ENCODE measurements at regions of chr4 and their contacts with region 1.

Region 1: GRCh38 chr4:173301518-173302201 is 32.5 kb downstream of the HMGB2 start:
- DNase-seq: no peak
- ATAC-seq: peak; percentile 58
- H3K4me3 ChIP-seq: no peak overlapping the region
- H3K27ac ChIP-seq: no peak overlapping the region
- H3K4me1 ChIP-seq: no peaks in the 10 kb centered on the region
- H3K27me3 ChIP-seq: no peaks in the 10 kb centered on the region
- CTCF ChIP-seq: peak; percentile 58 to 70 (median 60)
- EP300 ChIP-seq: no peak
- POLR2A ChIP-seq: no peak
- RAD21 ChIP-seq: peak; percentile 75

Region 2: DNA sequence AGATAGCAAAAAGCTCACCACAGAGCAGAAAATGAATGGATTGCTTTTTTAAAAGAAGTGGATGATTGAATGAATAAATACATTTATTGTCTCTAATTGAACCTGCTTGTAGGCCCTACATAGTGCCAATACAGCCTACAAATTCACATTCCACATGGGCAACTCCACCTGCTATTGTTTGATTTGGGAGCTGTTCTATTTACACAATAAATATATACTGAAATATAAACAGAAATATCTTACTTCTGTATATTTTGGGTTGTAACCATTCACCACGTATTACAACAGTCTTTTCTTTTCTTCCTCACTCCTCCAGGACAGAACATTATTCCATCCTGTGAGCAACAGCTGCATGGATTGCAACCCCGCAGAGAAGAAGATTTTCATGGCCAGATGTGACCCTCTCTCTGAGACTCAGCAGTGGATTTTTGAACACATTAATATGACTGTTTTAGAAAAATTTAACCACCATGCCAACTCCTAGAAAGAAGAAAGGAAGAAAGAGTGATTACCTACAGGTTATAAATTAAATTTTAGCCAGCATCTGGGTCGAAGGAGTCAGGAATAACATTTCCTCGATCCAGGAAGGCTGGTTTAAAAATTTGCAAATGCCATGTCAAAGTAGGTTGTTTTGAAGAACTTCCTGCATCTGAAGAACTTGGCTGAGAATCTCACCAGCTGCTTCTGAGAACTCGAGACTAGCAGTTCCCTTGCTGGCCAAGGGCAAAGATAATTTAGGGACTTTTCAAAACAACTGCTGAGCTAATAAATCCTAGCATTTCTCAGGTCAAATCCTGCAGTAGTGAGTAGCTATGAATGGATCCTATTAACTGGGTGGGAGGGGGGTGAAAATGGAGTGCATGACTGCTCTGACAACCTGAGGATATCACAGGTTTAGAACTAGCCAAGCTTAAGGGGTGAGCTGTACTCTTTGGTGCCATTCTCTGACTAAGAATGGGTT is 261.8 kb before region 1 on chr4:
- CTCF ChIA-PET with region 1: interaction called, 10 read pairs
- POLR2A ChIA-PET with region 1: no interaction called
- RAD21 ChIA-PET with region 1: no interaction called
- SMC1A ChIA-PET with region 1: no interaction called
- in situ Hi-C with region 1: no loop called
- intact Hi-C with region 1: no loop called
- DNase-seq: no peak
- ATAC-seq: no peak
- H3K4me3 ChIP-seq: no peak overlapping the region
- H3K27ac ChIP-seq: no peak overlapping the region
- H3K4me1 ChIP-seq: no peaks in the 10 kb centered on the region
- H3K27me3 ChIP-seq: no peaks in the 10 kb centered on the region
- CTCF ChIP-seq: no peak
- EP300 ChIP-seq: no peak
- POLR2A ChIP-seq: no peak
- RAD21 ChIP-seq: no peak

Region 3: DNA sequence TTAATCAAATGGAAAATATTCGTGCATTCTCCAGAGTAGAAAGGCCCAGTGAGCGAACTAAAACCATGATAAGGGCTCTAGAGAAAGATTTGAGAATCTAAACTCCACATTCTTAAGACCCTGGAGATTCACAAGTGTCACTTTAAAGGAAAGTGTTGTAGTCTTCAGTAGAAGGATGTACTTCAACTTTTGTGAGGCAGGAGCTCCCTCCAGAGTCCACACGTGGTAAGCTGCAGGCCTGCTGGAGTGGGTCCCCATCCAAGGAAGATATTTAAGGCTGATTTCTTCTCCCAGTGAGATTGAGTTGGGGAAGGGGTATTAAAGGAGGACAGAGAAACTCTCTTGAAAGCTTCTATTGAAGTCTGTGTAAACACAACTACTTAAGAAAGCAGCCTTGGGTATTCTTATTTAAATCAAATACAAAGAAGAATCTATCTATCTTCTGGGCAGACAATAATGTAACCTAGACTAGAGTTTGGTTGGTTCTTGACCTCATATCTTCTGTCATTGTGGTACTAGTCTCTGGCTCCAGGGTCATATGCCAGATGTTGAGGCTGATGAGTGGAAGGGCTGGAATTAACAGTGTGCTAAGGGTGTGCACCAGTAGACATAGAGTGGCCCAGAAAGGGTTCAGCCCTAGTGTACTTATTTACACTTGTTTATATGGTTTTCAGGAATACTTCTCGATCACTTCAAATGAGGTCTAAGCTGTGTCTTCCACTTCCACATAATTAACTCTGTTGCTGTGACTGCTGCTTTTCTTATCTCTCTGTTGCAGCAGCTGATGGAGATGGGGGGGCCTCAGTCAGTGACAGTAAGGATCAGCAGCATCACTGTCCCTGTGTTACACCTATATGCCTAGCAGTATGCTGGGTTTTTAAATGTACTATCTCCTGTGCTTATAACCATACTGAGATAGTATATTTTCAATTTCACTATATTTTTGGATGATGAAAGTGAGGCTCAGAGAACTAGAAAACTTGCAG is 43.6 kb before region 1 on chr4:
- CTCF ChIA-PET with region 1: interaction called, 66 read pairs
- POLR2A ChIA-PET with region 1: interaction called, 3 read pairs
- RAD21 ChIA-PET with region 1: interaction called, 22 read pairs
- SMC1A ChIA-PET with region 1: interaction called, 17 read pairs
- in situ Hi-C with region 1: no loop called
- intact Hi-C with region 1: no loop called
- DNase-seq: no peak
- ATAC-seq: peak; percentile 92
- H3K4me3 ChIP-seq: no peak overlapping the region
- H3K27ac ChIP-seq: no peak overlapping the region
- H3K4me1 ChIP-seq: peaks cover 15% of the 10 kb centered on the region
- H3K27me3 ChIP-seq: no peaks in the 10 kb centered on the region
- CTCF ChIP-seq: peak; percentile 83 to 95 (median 91)
- EP300 ChIP-seq: no peak
- POLR2A ChIP-seq: no peak
- RAD21 ChIP-seq: peak; percentile 96

Region 4: DNA sequence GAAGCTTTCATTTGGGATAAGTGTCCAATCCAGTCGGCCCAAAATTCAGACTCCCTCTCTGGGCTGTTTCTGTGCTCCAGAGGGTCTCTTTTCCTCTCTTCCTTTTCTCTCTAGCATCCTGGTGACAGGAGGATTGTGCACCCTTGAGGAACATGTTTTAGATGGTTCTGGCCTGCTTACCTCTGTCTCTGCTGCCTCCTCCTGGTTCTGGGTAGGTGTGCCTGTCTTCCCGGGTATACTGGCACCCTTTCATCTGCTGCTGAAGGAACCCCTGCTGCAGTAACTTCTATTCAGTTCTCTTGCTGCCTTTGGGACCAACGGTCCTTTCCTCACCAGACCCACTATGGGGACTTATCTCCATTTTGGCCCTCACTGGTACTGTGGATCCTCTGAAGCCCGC is 20.7 kb before region 1 on chr4:
- CTCF ChIA-PET with region 1: interaction called, 146 read pairs
- POLR2A ChIA-PET with region 1: no interaction called
- RAD21 ChIA-PET with region 1: interaction called, 13 read pairs
- SMC1A ChIA-PET with region 1: interaction called, 8 read pairs
- in situ Hi-C with region 1: no loop called
- intact Hi-C with region 1: no loop called
- DNase-seq: no peak
- ATAC-seq: peak; percentile 47; the same call in 2 of the 3 replicates
- H3K4me3 ChIP-seq: no peak overlapping the region
- H3K27ac ChIP-seq: no peak overlapping the region
- H3K4me1 ChIP-seq: no peaks in the 10 kb centered on the region
- H3K27me3 ChIP-seq: no peaks in the 10 kb centered on the region
- CTCF ChIP-seq: peak; percentile 15 to 17 (median 16); a peak in 2 of 6 replicates
- EP300 ChIP-seq: no peak
- POLR2A ChIP-seq: no peak
- RAD21 ChIP-seq: peak; percentile 36

Region 5: GRCh38 chr4:173334085-173334772 is 32.6 kb after region 1 on chr4 and contains the start of gene HMGB2:
- CTCF ChIA-PET with region 1: interaction called, 28 read pairs
- POLR2A ChIA-PET with region 1: interaction called, 3 read pairs
- RAD21 ChIA-PET with region 1: interaction called, 12 read pairs
- SMC1A ChIA-PET with region 1: interaction called, 5 read pairs
- in situ Hi-C with region 1: no loop called
- intact Hi-C with region 1: no loop called
- DNase-seq: peak; percentile 99
- ATAC-seq: peak; percentile 92
- H3K4me3 ChIP-seq: peak within 1 kb of the TSS; percentile 94
- H3K27ac ChIP-seq: peak within 1 kb of the TSS; percentile 100
- H3K4me1 ChIP-seq: peaks cover 6% of the 10 kb centered on the region
- H3K27me3 ChIP-seq: no peaks in the 10 kb centered on the region
- CTCF ChIP-seq: no peak
- EP300 ChIP-seq: no peak; a peak in 1 of 4 replicates
- POLR2A ChIP-seq: peak; percentile 98
- RAD21 ChIP-seq: no peak
- polyA plus RNA-seq, gene HMGB2: 858 to 954 TPM

Region 6: GRCh38 chr4:173413036-173413435 is 111.4 kb after region 1 on chr4:
- CTCF ChIA-PET with region 1: interaction called, 19 read pairs
- POLR2A ChIA-PET with region 1: no interaction called
- RAD21 ChIA-PET with region 1: interaction called, 4 read pairs
- SMC1A ChIA-PET with region 1: interaction called, 7 read pairs
- in situ Hi-C with region 1: no loop called
- intact Hi-C with region 1: no loop called
- DNase-seq: no peak
- ATAC-seq: no peak
- H3K4me3 ChIP-seq: no peak overlapping the region
- H3K27ac ChIP-seq: no peak overlapping the region
- H3K4me1 ChIP-seq: no peaks in the 10 kb centered on the region
- H3K27me3 ChIP-seq: no peaks in the 10 kb centered on the region
- CTCF ChIP-seq: no peak
- EP300 ChIP-seq: no peak
- POLR2A ChIP-seq: no peak
- RAD21 ChIP-seq: no peak